PC-9 (cell line): ENCODE measurements at regions of chr14 and their contacts with region 1.

Region 1: GRCh38 chr14:95442633-95443021 is 73.8 kb downstream of the SYNE3 start:
- DNase-seq: peak; percentile 37 to 56
- H3K4me3 ChIP-seq: no peak overlapping the region
- H3K27ac ChIP-seq: no peak overlapping the region
- H3K4me1 ChIP-seq: no peaks in the 10 kb centered on the region
- H3K27me3 ChIP-seq: no peaks in the 10 kb centered on the region
- CTCF ChIP-seq: peak; percentile 77

Region 2: GRCh38 chr14:95078828-95079227 is 363.8 kb before region 1 on chr14:
- CTCF ChIA-PET with region 1: no interaction called
- POLR2A ChIA-PET with region 1: no interaction called
- intact Hi-C with region 1: no loop called
- DNase-seq: no peak
- H3K4me3 ChIP-seq: no peak overlapping the region
- H3K27ac ChIP-seq: no peak overlapping the region
- H3K4me1 ChIP-seq: no peaks in the 10 kb centered on the region
- H3K27me3 ChIP-seq: peaks cover 41% of the 10 kb centered on the region
- CTCF ChIP-seq: no peak

Region 3: DNA sequence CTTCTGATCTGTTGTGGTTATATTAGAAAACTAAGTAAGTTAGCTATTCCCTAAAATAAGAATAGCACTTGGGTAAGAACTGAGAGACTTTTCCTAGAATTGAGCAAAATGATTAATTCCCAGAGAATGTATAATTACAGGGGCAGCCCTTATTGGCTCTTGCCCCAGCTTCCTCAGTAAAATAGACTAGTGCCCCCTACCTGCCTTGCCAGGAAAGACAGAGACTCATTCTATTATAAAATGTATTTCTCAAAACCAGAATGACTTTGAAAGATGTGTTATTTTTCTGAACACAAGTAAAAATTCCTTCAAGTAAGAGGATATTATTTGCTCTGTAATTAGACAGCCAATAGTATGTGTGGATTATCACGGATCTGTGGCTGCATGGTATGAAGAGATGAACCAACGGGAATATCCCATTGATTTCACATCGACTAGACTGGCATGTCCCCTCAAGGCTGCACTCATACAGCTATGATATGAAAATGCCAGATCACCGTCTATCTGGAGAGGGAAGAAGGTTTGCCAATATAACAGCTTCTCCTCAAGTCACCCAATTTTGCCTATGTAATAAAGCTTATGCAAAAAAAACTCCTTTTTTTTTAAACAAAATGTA is 84.9 kb after region 1 on chr14:
- CTCF ChIA-PET with region 1: no interaction called
- POLR2A ChIA-PET with region 1: no interaction called
- intact Hi-C with region 1: loop called (anchors 1 kb)
- DNase-seq: no peak
- H3K4me3 ChIP-seq: no peak overlapping the region
- H3K27ac ChIP-seq: 0 out of 2 replicates have a peak overlapping the region, but pooled peaks have one; percentile 33
- H3K4me1 ChIP-seq: peaks cover 79% of the 10 kb centered on the region
- H3K27me3 ChIP-seq: no peaks in the 10 kb centered on the region
- CTCF ChIP-seq: peak; percentile 76